ENCODE measurements at regions of chr22 and their contacts with region 1.

Region 1: GRCh38 chr22:40374567-40374966 is 4.2 kb downstream of the SGSM3 start:
- DNase-seq: no peak
- H3K4me3 ChIP-seq: no peak overlapping the region
- H3K27ac ChIP-seq: no peak overlapping the region
- H3K4me1 ChIP-seq: peaks cover 9% of the 10 kb centered on the region
- H3K27me3 ChIP-seq: no peaks in the 10 kb centered on the region
- CTCF ChIP-seq: no peak

Region 2: GRCh38 chr22:40326905-40327735 is 47.4 kb before region 1 on chr22:
- CTCF ChIA-PET with region 1: no interaction called
- dilution Hi-C with region 1: loop called (anchors 5 kb)
- in situ Hi-C with region 1: no loop called
- intact Hi-C with region 1: no loop called
- DNase-seq: no peak
- H3K4me3 ChIP-seq: no peak overlapping the region
- H3K27ac ChIP-seq: no peak overlapping the region
- H3K4me1 ChIP-seq: no peaks in the 10 kb centered on the region
- H3K27me3 ChIP-seq: no peaks in the 10 kb centered on the region
- CTCF ChIP-seq: no peak

Region 3: DNA sequence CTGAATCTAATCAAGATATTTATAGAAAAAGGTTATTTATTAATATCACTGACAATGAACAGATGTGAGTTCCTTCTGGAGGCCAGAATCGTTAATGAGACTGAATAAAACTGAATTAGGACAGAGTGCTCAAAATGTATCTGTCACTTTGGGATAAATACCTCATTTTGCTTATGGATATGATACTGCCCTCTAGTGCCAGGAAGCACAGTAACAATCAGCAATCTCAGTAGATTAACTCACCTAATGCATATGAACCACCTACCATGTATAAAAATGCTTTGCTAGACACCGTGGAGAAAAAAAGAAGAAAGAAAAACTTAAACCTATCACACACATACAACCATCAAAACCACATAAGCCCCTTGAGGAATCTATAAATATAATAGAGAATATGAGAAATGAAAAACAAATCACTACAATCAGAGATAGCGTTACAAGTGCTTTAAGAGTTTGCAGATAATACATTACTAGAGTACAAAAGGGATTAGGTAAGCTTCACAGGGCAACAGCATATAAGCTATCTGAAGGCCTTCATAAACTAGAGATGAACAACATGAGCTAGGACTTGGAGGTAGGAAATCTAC is 113.2 kb after region 1 on chr22:
- CTCF ChIA-PET with region 1: no interaction called
- dilution Hi-C with region 1: loop called (anchors 5 kb)
- in situ Hi-C with region 1: no loop called
- intact Hi-C with region 1: no loop called
- DNase-seq: no peak
- H3K4me3 ChIP-seq: no peak overlapping the region
- H3K27ac ChIP-seq: peak overlapping the region; percentile 83
- H3K4me1 ChIP-seq: peaks cover 43% of the 10 kb centered on the region
- H3K27me3 ChIP-seq: no peaks in the 10 kb centered on the region
- CTCF ChIP-seq: peak; percentile 81 to 86

Region 4: GRCh38 chr22:40645579-40646197 is 271.1 kb after region 1 on chr22:
- CTCF ChIA-PET with region 1: no interaction called
- dilution Hi-C with region 1: no loop called
- in situ Hi-C with region 1: no loop called
- intact Hi-C with region 1: loop called (anchors 5 kb)
- DNase-seq: no peak
- H3K4me3 ChIP-seq: no peak overlapping the region
- H3K27ac ChIP-seq: no peak overlapping the region
- H3K4me1 ChIP-seq: peaks cover 18% of the 10 kb centered on the region
- H3K27me3 ChIP-seq: no peaks in the 10 kb centered on the region
- CTCF ChIP-seq: no peak

Region 5: GRCh38 chr22:40919446-40919845 is 544.9 kb after region 1 on chr22:
- CTCF ChIA-PET with region 1: no interaction called
- dilution Hi-C with region 1: no loop called
- in situ Hi-C with region 1: no loop called
- intact Hi-C with region 1: no loop called
- DNase-seq: no peak
- H3K4me3 ChIP-seq: no peak overlapping the region
- H3K27ac ChIP-seq: no peak overlapping the region
- H3K4me1 ChIP-seq: no peaks in the 10 kb centered on the region
- H3K27me3 ChIP-seq: no peaks in the 10 kb centered on the region
- CTCF ChIP-seq: no peak